Activated CD4-positive, alpha-beta T cell treated with anti-CD3 and anti-CD28 coated beads, Interleukin-2, amount 10 ng/mL, durations not matched to agents 24 days and 14 days (primary cell): ENCODE measurements at regions of chr5 and their contacts with region 1.

Region 1: DNA sequence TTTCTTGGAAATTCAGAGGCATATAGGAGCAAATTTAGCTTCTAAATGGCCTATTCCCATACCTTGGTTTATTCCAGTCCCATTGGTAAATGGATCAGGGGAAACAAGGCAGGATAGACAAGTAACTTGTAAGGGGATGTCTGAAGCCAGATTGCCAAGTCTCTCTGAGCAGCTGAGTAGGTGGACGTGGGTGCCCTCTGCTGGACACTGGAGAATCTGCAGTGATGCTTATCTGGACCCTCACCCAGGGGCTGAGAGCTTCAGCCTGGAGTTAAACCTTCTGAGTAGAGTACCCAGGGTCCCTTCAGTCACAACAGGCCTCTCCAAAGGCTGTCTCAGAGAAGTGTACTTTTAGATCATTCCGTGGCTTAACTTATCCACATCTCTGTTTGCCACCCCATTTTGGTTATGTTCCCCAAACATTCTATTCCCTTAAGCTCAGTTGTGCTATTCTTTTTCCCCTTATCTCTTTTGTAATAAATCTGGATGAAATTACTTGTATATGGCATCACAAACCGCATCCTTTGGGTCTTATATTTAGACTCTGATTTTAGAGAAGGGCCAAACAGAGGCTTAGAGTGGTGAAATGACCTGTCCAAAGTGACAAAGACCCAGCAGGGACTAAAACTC is 218.3 kb upstream of the GLRA1 start:
- DNase-seq: peak; percentile 86
- H3K4me3 Mint-ChIP-seq: no peak overlapping the region
- H3K27ac Mint-ChIP-seq: no peak overlapping the region
- H3K4me1 Mint-ChIP-seq: no peaks in the 10 kb centered on the region
- H3K27me3 Mint-ChIP-seq: peaks cover 3% of the 10 kb centered on the region

Region 2: GRCh38 chr5:152288499-152288898 is 145.5 kb after region 1 on chr5:
- intact Hi-C with region 1: no loop called
- DNase-seq: no peak
- H3K4me3 Mint-ChIP-seq: no peak overlapping the region
- H3K27ac Mint-ChIP-seq: no peak overlapping the region
- H3K4me1 Mint-ChIP-seq: no peaks in the 10 kb centered on the region
- H3K27me3 Mint-ChIP-seq: no peaks in the 10 kb centered on the region

Region 3: DNA sequence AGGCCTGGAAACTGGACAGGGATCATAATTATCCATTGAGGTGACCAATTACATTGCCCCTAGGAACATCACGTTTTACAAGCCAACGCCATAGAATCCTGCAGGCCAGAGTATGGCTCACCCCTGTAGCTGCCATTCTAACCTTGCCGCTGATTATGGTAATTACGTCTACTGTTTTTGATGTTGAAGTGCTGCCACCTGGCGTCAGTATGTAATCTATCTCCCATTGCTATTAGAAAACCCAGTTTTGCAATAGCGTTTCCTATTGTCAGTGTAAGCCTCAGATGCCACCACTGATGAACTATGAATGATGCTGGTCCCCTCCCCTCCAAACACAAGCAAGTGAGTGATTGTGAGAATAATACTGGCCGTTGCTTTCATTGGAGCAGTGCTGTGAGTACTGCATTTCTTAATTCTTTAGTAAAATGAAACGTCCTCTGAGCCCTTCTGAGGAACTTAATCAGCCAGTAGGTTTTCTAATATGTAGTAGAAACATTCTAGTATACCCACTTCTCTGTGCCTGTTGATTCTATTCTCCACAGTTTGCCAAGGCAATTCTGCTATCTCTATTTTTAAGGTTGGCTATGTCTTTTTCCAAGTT is 362.6 kb after region 1 on chr5:
- intact Hi-C with region 1: loop called (anchors 10 kb)
- DNase-seq: peak; percentile 78
- H3K4me3 Mint-ChIP-seq: no peak overlapping the region
- H3K27ac Mint-ChIP-seq: no peak overlapping the region
- H3K4me1 Mint-ChIP-seq: no peaks in the 10 kb centered on the region
- H3K27me3 Mint-ChIP-seq: peaks cover 3% of the 10 kb centered on the region